ENCODE measurements at regions of chr16 and their contacts with region 1.

Region 1: GRCh38 chr16:48064971-48065370 is 90.8 kb downstream of the ABCC12 start:
- DNase-seq: no peak
- H3K4me3 ChIP-seq: no peak overlapping the region
- H3K27ac ChIP-seq: no peak overlapping the region
- H3K4me1 ChIP-seq: no peaks in the 10 kb centered on the region
- H3K27me3 ChIP-seq: no peaks in the 10 kb centered on the region
- CTCF ChIP-seq: no peak

Region 2: GRCh38 chr16:48003226-48003907 is 61.6 kb before region 1 on chr16:
- intact Hi-C with region 1: loop called (anchors 10 kb)
- DNase-seq: no peak
- H3K4me3 ChIP-seq: no peak overlapping the region
- H3K27ac ChIP-seq: no peak overlapping the region
- H3K4me1 ChIP-seq: no peaks in the 10 kb centered on the region
- H3K27me3 ChIP-seq: no peaks in the 10 kb centered on the region
- CTCF ChIP-seq: no peak

Measured in ascending aorta (tissue), 2 donors.